ENCODE measurements at regions of chr20 and their contacts with region 1.

Region 1: GRCh38 chr20:57323034-57323433 is 6.6 kb upstream of the SPO11 start:
- DNase-seq: peak; percentile 44 to 79 (median 64)
- H3K4me3 ChIP-seq: no peak overlapping the region
- H3K27ac ChIP-seq: no peak overlapping the region
- H3K4me1 ChIP-seq: peaks cover 2% of the 10 kb centered on the region
- H3K27me3 ChIP-seq: no peaks in the 10 kb centered on the region
- CTCF ChIP-seq: no peak
- EP300 ChIP-seq: no peak
- POLR2A ChIP-seq: no peak

Region 2: DNA sequence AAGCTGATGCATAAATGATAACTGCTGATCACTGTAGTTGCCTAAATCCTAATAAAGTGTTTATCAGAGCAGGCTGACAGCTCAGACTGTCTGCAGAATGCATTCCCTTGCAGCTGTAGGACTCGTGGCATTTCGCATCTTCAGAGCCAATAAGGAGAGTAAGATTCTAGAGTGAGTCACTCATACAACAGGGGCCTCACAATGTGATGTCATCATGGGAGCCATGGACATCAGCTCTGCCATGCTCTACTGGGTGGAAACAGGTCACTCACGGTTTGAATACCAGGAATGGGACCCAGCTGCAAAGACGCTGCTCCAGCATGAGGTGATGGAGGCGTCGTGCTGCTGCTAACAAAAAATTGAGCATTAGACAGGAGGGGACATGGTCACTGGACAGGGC is 782.6 kb before region 1 on chr20:
- intact Hi-C with region 1: loop called in 1 of 4 experiments (anchors 10 kb)
- DNase-seq: no peak
- H3K4me3 ChIP-seq: no peak overlapping the region
- H3K27ac ChIP-seq: no peak overlapping the region
- H3K4me1 ChIP-seq: peaks cover 2% of the 10 kb centered on the region
- H3K27me3 ChIP-seq: no peaks in the 10 kb centered on the region
- CTCF ChIP-seq: no peak
- EP300 ChIP-seq: no peak
- POLR2A ChIP-seq: no peak

Region 3: DNA sequence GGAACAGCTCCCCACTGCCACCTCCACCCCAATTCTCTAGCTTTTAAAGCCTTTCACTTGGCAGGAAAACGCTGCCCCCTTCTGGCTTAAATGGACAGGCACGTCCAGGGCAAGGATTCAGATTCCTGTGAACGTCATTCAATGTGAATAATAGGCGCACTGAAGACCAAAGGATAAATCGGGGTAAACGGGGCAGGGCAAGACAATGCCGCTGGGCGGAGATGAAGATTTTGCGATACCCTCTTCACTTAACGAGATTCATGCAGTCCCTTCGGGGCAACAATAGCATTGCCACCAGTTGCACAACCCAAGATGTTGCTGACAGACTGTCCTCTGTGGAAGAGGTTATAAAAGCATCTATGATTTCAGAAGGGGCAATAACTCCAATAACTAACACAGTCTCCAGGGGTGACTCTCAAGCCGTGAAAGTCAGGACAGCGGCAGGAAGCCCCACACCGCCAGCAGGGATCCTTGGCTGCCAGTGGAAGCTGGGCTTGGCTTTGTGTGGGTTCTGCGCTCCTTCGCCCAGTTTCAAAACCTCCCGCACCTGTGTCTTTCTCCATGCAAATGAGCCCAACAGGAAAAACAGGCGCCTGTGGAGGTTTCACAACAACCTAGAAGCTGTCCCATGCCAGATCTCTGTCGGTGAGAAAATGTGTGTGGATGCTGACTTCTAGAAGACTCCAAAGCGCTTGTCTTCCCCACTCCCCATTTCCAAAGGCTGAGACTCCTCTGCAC is 348.4 kb before region 1 on chr20:
- intact Hi-C with region 1: no loop called
- DNase-seq: no peak
- H3K4me3 ChIP-seq: no peak overlapping the region
- H3K27ac ChIP-seq: no peak overlapping the region
- H3K4me1 ChIP-seq: no peaks in the 10 kb centered on the region
- H3K27me3 ChIP-seq: no peaks in the 10 kb centered on the region
- CTCF ChIP-seq: no peak
- EP300 ChIP-seq: no peak
- POLR2A ChIP-seq: no peak

Measured in ovary (tissue), 10 donors.